Activated naive CD4-positive, alpha-beta T cell treated with anti-CD3 and anti-CD28 coated beads for 36 hours (primary cell): ENCODE measurements at regions of chr4 and their contacts with region 1.

Region 1: DNA sequence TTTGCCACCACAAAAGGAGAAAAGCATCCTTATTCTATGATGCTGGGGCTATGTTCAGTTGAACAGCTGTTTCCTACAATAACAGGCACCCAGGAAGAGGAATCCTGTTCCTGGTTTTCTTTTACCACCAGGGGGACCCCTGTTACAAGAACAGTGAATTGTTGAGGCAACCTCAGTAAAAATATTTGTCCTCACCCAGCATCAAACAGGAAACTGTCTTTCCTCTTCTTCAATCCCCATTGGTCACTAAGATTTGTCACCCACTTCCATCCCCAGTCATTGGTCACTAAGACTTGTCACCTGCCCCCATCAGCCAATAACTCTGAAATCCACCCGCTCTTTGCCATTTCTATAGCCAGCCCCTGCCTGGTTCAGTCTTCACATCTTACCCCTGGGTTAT is 143.5 kb upstream of the GALNT7 start:
- DNase-seq: peak; percentile 43
- H3K4me3 Mint-ChIP-seq: no peak overlapping the region
- H3K27ac Mint-ChIP-seq: no peak overlapping the region
- H3K4me1 Mint-ChIP-seq: peaks cover 4% of the 10 kb centered on the region
- H3K27me3 Mint-ChIP-seq: no peaks in the 10 kb centered on the region

Region 2: DNA sequence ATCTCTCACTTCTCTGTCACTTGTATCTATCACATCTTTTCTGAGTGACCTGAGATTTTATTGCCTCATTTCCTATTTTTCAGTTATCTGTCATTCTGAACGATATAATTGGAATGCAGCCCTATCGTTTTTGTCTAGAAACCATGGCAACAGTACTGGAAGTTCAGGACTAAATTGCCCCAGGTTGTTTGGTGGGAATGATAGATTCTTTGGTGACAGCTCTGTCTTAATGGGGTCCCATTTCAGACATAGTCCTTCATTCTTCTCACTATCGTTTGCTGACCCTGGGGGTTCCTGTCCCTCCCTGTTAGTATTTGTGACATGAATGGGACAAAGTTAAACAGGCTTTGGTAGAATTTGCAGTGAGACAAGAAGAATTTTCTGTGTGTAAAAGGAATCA is 124.2 kb before region 1 on chr4:
- CTCF ChIA-PET with region 1: no interaction called
- intact Hi-C with region 1: no loop called
- DNase-seq: no peak
- H3K4me3 Mint-ChIP-seq: no peak overlapping the region
- H3K27ac Mint-ChIP-seq: no peak overlapping the region
- H3K4me1 Mint-ChIP-seq: no peaks in the 10 kb centered on the region
- H3K27me3 Mint-ChIP-seq: peaks cover 6% of the 10 kb centered on the region

Region 3: GRCh38 chr4:173252024-173252935 is 227.1 kb after region 1 on chr4:
- CTCF ChIA-PET with region 1: interaction called, 31 read pairs
- intact Hi-C with region 1: loop called (anchors 1 kb)
- DNase-seq: peak; percentile 48
- H3K4me3 Mint-ChIP-seq: no peak overlapping the region
- H3K27ac Mint-ChIP-seq: no peak overlapping the region
- H3K4me1 Mint-ChIP-seq: peaks cover 19% of the 10 kb centered on the region
- H3K27me3 Mint-ChIP-seq: no peaks in the 10 kb centered on the region

Region 4: GRCh38 chr4:173426064-173426463 is 400.9 kb after region 1 on chr4:
- CTCF ChIA-PET with region 1: no interaction called
- intact Hi-C with region 1: no loop called
- DNase-seq: no peak
- H3K4me3 Mint-ChIP-seq: no peak overlapping the region
- H3K27ac Mint-ChIP-seq: no peak overlapping the region
- H3K4me1 Mint-ChIP-seq: peaks cover 22% of the 10 kb centered on the region
- H3K27me3 Mint-ChIP-seq: no peaks in the 10 kb centered on the region